ENCODE measurements at regions of chr4 and their contacts with region 1.

Region 1: DNA sequence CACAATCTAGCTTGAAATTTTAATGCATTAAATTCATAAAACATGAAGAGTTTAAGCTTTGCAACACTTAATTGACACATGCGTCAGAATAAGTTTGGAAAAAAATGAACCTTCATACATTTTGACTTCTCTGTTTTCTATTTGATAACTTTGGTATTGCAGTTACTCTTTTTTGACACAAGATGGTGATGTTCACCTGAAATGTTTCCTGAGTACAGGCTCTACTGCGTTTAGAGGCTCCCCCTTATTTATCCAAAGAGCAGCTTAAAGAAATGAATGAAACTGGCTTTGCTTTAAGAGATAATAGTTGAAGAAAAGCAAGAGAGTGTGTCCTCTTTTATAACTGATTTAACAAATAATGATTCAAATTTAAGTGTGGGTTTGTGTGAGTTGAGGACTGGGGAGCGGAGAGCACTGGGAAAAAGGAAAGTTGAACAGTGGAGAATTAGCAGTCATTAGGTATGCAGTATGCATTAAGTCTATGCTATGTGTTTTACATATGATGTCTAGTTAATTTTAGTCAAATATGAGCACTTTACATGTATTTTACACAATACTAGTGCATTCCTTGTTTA is 180.6 kb upstream of the NUDT6 start:
- DNase-seq: no peak
- H3K4me3 ChIP-seq: no peak overlapping the region
- H3K27ac ChIP-seq: no peak overlapping the region
- H3K4me1 ChIP-seq: peaks cover 0 to 9% (median 5%) of the 10 kb centered on the region in 4 donors
- H3K27me3 ChIP-seq: no peaks in the 10 kb centered on the region
- CTCF ChIP-seq: peak; percentile 45 to 75 (median 52)
- EP300 ChIP-seq: no peak
- POLR2A ChIP-seq: no peak

Region 2: GRCh38 chr4:123200051-123200940 is 97.3 kb after region 1 on chr4:
- intact Hi-C with region 1: no loop called
- DNase-seq: no peak
- H3K4me3 ChIP-seq: no peak overlapping the region
- H3K27ac ChIP-seq: no peak overlapping the region
- H3K4me1 ChIP-seq: peaks cover 0 to 9% (median 3%) of the 10 kb centered on the region in 4 donors
- H3K27me3 ChIP-seq: no peaks in the 10 kb centered on the region
- CTCF ChIP-seq: no peak
- EP300 ChIP-seq: no peak
- POLR2A ChIP-seq: no peak

Region 3: DNA sequence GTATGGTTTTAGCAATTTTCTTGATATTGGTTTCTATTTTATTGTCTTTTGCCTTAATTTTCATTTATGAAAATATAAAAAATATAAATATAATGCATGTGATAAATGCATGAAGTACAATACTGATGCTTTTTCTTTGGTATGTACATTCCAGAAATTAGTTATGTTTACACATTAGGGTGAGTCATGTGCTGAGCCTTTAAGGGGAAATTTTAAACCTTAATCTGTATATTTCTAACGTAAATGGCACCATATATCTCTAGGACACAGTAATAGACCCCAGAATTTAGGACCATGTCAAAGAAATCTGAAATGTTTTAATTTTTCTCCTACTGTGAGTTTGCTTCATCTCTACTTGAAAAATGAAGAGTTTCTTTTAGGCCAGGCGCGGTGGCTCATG is 175.8 kb after region 1 on chr4:
- intact Hi-C with region 1: no loop called
- DNase-seq: no peak
- H3K4me3 ChIP-seq: no peak overlapping the region
- H3K27ac ChIP-seq: no peak overlapping the region
- H3K4me1 ChIP-seq: peaks cover 0 to 5% (median 3%) of the 10 kb centered on the region in 4 donors
- H3K27me3 ChIP-seq: no peaks in the 10 kb centered on the region
- CTCF ChIP-seq: no peak
- EP300 ChIP-seq: no peak
- POLR2A ChIP-seq: no peak

Region 4: GRCh38 chr4:123649645-123650391 is 546.8 kb after region 1 on chr4:
- intact Hi-C with region 1: loop called (anchors 10 kb)
- DNase-seq: peak; percentile 75
- H3K4me3 ChIP-seq: peak overlapping the region in 1 of 4 donors; percentile 1
- H3K27ac ChIP-seq: peak overlapping the region; percentile 45 to 75 (median 70)
- H3K4me1 ChIP-seq: peaks cover 0 to 42% (median 40%) of the 10 kb centered on the region in 4 donors
- H3K27me3 ChIP-seq: no peaks in the 10 kb centered on the region
- CTCF ChIP-seq: no peak
- EP300 ChIP-seq: peak in 1 of 4 donors; percentile 59
- POLR2A ChIP-seq: no peak

Region 5: GRCh38 chr4:124111922-124112321 is 1008.9 kb after region 1 on chr4:
- intact Hi-C with region 1: loop called (anchors 5 kb)
- DNase-seq: no peak
- H3K4me3 ChIP-seq: no peak overlapping the region
- H3K27ac ChIP-seq: no peak overlapping the region
- H3K4me1 ChIP-seq: peaks cover 0 to 16% (median 4%) of the 10 kb centered on the region in 4 donors
- H3K27me3 ChIP-seq: no peaks in the 10 kb centered on the region
- CTCF ChIP-seq: peak; percentile 38 to 57 (median 47)
- EP300 ChIP-seq: peak in 1 of 4 donors; percentile 7
- POLR2A ChIP-seq: no peak

Region 6: DNA sequence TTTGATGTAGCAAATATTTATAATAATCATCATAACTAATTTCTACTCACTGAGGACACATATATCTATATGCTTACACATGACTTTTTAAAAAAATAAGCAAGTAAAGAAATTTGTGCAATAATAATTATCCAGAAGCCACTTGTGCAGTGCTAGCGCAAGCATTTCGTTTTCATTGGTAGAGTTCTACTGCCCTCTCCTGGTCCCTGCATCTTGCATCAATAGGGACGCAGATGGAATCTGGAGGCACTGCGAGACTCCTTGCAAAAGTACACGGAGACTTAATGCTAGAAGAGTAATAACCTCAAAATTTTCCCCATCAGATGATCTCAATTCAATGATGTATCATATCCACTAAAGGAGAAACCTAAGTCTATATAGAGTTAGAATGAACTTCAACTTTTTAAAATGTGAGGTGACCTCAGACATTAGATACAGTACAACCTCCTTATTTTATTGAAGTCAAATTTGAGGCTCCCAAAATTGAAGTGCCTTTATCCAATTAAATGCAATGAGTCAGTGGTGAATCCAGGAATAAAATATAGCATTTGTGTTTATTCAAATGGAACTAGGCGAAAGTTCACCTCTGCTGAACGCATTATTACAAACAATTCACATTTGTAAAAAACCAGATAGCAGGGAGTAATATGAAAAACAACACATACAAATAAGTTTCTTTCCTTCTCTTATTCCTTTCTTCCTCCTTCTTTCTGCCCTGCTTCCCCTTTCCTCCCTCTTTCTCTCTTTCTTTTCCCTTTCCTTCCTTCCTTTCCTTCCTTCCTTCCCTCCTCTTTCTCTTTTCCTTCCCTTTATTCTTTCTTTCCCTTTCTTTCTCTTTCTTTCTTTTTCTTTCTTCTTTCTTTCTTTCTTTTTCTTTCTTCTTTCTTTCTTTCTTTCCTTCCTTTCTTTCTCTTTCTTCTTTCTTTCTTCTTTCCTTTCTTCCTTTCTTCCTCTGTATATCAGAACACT is 1159.5 kb after region 1 on chr4:
- intact Hi-C with region 1: loop called (anchors 2 kb)
- DNase-seq: peak; percentile 79
- H3K4me3 ChIP-seq: no peak overlapping the region
- H3K27ac ChIP-seq: no peak overlapping the region
- H3K4me1 ChIP-seq: peaks cover 0 to 10% (median 7%) of the 10 kb centered on the region in 4 donors
- H3K27me3 ChIP-seq: no peaks in the 10 kb centered on the region
- CTCF ChIP-seq: peak; percentile 60 to 83 (median 62)
- EP300 ChIP-seq: no peak
- POLR2A ChIP-seq: no peak

Region 7: GRCh38 chr4:124322234-124323065 is 1219.5 kb after region 1 on chr4:
- intact Hi-C with region 1: loop called (anchors 5 kb)
- DNase-seq: no peak
- H3K4me3 ChIP-seq: peak overlapping the region in 1 of 4 donors; percentile 7
- H3K27ac ChIP-seq: peak overlapping the region in 1 of 4 donors; percentile 6
- H3K4me1 ChIP-seq: no peaks in the 10 kb centered on the region
- H3K27me3 ChIP-seq: no peaks in the 10 kb centered on the region
- CTCF ChIP-seq: peak in 3 of 4 experiments; percentile 16 to 58 (median 51)
- EP300 ChIP-seq: no peak
- POLR2A ChIP-seq: no peak

Measured in sigmoid colon (tissue), 7 donors.